ENCODE measurements at regions of chr12 and their contacts with region 1.

Region 1: GRCh38 chr12:57452937-57453509 is 2.1 kb upstream of the INHBE start:
- DNase-seq: peak; percentile 79
- H3K4me3 ChIP-seq: no peak overlapping the region
- H3K27ac ChIP-seq: no peak overlapping the region
- H3K4me1 ChIP-seq: no peaks in the 10 kb centered on the region
- H3K27me3 ChIP-seq: no peaks in the 10 kb centered on the region
- CTCF ChIP-seq: peak; percentile 65

Region 2: GRCh38 chr12:57261428-57261865 is 191.6 kb before region 1 on chr12:
- intact Hi-C with region 1: loop called (anchors 5 kb)
- DNase-seq: no peak
- H3K4me3 ChIP-seq: no peak overlapping the region
- H3K27ac ChIP-seq: no peak overlapping the region
- H3K4me1 ChIP-seq: no peaks in the 10 kb centered on the region
- H3K27me3 ChIP-seq: no peaks in the 10 kb centered on the region
- CTCF ChIP-seq: no peak

Region 3: DNA sequence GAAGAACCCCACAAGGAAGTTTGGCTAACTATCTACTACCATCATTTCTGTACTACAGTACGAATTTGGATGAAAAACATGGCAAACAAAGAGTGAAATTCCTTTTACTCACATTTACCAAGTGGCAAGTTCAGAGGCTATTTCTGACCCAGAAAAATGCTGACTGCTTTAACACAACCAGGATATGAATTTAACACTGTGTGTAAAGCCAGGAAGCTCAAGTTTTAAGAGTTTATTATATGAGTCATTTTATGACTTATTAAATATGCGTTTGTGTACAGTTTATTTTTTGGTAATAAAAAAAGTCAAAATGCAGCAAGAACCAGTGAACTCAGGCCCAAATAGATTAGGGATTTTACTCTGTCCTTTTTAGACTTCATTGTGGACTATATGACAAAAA is 143.6 kb before region 1 on chr12:
- intact Hi-C with region 1: loop called (anchors 2 kb)
- DNase-seq: no peak
- H3K4me3 ChIP-seq: no peak overlapping the region
- H3K27ac ChIP-seq: peak overlapping the region; percentile 22
- H3K4me1 ChIP-seq: peaks cover 4% of the 10 kb centered on the region
- H3K27me3 ChIP-seq: no peaks in the 10 kb centered on the region
- CTCF ChIP-seq: no peak

Measured in colonic mucosa (tissue), 4 donors.